A673 (cell line): ENCODE measurements at regions of chr1 and their contacts with region 1.

Region 1: DNA sequence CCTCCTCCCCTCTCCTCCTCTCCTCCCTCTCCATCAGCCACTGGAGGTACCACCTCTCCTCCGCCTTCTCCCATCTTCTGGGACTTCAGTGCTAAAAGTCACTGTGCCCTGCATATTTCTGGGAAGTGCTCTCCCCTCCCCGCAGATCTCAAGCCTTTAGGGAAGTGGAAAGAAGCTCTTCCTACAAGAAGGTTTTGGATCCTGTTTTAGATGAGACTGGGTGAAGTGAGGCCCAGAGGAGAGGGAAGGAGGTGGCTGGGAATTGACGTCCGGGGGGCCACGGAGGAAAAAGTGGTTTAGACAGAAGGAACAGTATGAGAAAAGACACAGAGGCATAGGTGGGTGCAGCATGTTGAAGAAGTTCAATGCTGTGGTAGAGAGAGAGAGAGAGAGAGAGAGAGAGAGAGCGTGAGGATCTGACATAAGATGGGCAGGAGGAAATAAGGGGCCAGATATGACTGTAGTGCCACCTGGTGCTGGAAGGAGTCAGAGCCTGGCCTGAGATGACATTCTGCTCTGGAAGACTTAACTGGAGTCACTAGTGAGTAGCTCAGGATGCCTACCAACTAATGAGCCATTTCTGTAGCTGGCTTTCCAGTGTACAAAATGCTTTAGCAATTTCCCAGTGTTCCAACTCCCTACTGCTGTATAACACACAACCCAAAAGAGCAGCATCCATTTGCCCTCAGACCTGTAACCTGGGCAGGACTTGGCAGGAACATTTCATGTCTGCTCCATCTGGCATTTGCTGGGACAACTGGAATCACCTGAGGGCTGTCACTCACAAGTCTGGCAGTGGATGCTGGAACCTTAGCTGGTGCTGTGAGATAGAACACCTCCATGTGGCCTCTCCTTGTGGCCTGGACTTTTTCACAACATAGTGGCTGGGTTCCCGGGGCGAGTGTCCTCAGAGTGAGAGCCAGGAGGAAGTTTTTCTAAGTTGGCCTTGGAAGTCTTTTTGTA is 16.6 kb upstream of the ZSCAN20 start:
- DNase-seq: peak; percentile 87
- H3K4me3 ChIP-seq: no peak overlapping the region
- H3K27ac ChIP-seq: no peak overlapping the region
- H3K4me1 ChIP-seq: peaks cover 4% of the 10 kb centered on the region
- H3K27me3 ChIP-seq: no peaks in the 10 kb centered on the region
- CTCF ChIP-seq: peak; percentile 82

Region 2: GRCh38 chr1:33349778-33350610 is 105.8 kb before region 1 on chr1:
- CTCF ChIA-PET with region 1: interaction called, 15 read pairs
- POLR2A ChIA-PET with region 1: no interaction called
- intact Hi-C with region 1: no loop called
- DNase-seq: peak; percentile 92
- H3K4me3 ChIP-seq: peak overlapping the region; percentile 94
- H3K27ac ChIP-seq: peak overlapping the region; percentile 98
- H3K4me1 ChIP-seq: peaks cover 35% of the 10 kb centered on the region
- H3K27me3 ChIP-seq: no peaks in the 10 kb centered on the region
- CTCF ChIP-seq: no peak

Region 3: DNA sequence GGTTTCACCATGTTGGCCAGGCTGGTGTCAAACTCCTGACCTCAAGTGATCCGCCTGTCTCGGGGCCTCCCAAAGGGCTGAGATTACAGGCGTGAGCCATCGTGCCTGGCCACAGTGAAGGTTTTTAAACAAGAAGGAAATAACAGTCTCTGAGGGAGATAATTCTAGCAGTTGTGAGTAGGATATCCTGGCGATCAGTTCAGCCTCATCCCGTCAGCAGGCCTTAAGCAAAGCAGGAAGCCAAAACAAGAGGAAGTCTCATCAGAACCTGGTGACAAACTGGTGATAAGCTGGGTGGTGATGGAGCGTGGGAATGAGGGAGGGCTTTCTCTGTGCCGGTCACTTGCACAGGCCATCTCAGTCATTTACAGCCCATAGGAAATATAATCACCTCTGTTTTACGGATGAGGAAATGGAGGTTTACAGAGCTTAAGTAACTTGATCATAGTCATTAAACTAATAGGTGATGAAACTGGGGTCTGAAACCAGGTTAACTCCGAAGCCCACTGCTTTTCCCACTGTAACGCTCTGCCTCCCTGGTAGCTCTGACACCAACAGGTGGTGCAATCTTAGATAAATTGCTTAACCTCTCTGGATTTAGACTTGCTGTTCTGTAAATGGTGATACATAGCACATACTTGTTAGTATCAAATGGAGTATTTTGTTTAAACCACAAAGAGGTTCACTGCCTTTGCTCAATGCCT is 94.1 kb before region 1 on chr1:
- CTCF ChIA-PET with region 1: interaction called, 3 read pairs
- POLR2A ChIA-PET with region 1: no interaction called
- intact Hi-C with region 1: loop called (anchors 5 kb)
- DNase-seq: no peak
- H3K4me3 ChIP-seq: no peak overlapping the region
- H3K27ac ChIP-seq: peak overlapping the region; percentile 94
- H3K4me1 ChIP-seq: peaks cover 44% of the 10 kb centered on the region
- H3K27me3 ChIP-seq: no peaks in the 10 kb centered on the region
- CTCF ChIP-seq: no peak

Region 4: DNA sequence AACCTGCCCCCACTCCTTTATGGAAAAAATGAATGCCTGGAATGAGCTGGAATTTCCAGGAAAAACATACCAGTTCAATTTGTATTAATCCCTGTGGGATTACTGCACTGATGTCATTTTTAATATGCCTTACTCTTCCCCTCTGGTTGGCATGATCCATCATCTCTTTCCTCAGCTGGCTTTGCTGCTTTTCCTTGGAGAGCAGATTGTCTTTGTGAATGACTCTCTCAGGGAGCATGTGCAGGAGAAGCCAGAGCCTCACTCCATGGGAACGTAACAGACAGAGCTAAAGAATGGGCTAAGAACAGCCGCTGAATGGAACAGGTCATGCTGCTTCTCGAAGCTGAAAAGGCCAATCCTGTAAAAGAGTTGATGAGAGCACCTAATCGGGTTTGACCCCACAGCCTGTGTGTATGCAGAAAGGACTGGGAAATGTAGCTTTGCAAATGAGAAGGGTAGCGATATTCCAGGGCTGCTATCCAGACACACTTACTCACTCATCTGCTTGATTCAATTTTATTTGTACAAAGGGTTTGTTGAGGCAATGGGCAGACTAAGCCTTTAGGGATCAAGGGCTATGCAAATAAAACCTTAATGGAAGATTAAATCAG is 45.6 kb before region 1 on chr1:
- CTCF ChIA-PET with region 1: no interaction called
- POLR2A ChIA-PET with region 1: no interaction called
- intact Hi-C with region 1: no loop called
- DNase-seq: no peak
- H3K4me3 ChIP-seq: no peak overlapping the region
- H3K27ac ChIP-seq: no peak overlapping the region
- H3K4me1 ChIP-seq: no peaks in the 10 kb centered on the region
- H3K27me3 ChIP-seq: no peaks in the 10 kb centered on the region
- CTCF ChIP-seq: no peak

Region 5: DNA sequence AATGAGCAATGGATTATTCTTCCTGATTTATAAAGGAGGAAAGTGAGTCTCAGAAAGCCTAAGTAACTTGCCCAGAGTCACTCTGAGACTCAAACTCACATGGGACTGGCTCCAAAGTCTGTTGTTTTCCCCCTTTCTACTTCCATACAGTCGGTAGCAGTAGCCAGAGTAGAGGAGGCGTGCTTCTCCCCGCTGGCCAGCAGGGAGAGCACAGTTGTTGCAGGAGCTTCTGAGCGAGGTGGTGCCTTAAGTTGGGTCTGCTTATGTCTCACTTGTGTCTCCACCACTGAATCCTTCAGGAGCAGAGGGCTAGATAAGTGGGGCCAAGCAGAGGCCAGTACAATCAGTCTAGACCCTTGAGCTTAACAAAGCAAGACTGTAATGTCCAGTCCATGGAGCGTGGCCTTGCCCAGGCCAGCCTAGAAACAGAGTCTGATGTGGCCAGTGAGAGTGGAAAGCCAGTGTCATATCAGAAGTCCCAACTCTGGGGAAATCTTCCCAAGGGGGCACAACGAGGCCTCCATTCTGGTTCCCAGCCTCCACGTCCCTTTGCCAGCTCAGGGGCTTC is 198.5 kb after region 1 on chr1:
- CTCF ChIA-PET with region 1: no interaction called
- POLR2A ChIA-PET with region 1: no interaction called
- intact Hi-C with region 1: no loop called
- DNase-seq: peak; percentile 48
- H3K4me3 ChIP-seq: no peak overlapping the region
- H3K27ac ChIP-seq: no peak overlapping the region
- H3K4me1 ChIP-seq: no peaks in the 10 kb centered on the region
- H3K27me3 ChIP-seq: no peaks in the 10 kb centered on the region
- CTCF ChIP-seq: peak; percentile 62